Caco-2 (cell line): ENCODE measurements at regions of chr10 and their contacts with region 1.

Region 1: DNA sequence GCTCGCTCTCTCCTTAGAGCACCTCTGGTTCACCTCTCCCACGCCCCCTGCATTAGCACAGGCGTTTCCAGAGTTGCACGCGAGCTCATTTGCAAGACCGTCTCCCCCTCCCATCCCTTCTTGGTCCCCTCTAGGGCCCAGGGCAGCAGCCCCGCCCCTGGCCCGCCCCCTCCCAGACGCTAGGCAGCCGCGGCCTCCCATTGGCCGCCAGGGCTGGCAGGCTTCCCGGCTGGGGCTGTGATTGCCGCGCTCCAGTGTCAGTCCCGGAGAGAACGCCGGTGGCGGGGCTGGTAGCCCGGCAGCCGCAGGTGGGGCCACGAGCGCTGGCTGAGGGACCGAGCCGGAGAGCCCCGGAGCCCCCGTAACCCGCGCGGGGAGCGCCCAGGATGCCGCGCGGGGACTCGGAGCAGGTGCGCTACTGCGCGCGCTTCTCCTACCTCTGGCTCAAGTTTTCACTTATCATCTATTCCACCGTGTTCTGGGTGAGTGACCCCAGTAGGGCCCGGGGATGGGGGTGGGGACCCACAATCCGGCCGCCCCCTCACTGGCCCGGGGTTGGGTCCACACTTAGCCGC is at the start of gene TSPAN15:
- DNase-seq: peak; percentile 97 to 99
- H3K4me3 ChIP-seq: peak within 1 kb of the TSS; percentile 74
- H3K4me3 Mint-ChIP-seq: peak within 1 kb of the TSS; percentile 78
- H3K27ac Mint-ChIP-seq: peak within 1 kb of the TSS; percentile 81
- H3K4me1 ChIP-seq: peaks cover 44% of the 10 kb centered on the region
- H3K4me1 Mint-ChIP-seq: peaks cover 45% of the 10 kb centered on the region
- H3K27me3 ChIP-seq: no peaks in the 10 kb centered on the region
- H3K27me3 Mint-ChIP-seq: no peaks in the 10 kb centered on the region
- CTCF ChIP-seq: peak in 1 of 2 experiments; percentile 38
- total RNA-seq, gene TSPAN15: 86.5 and 89.0 TPM in 2 replicates

Region 2: DNA sequence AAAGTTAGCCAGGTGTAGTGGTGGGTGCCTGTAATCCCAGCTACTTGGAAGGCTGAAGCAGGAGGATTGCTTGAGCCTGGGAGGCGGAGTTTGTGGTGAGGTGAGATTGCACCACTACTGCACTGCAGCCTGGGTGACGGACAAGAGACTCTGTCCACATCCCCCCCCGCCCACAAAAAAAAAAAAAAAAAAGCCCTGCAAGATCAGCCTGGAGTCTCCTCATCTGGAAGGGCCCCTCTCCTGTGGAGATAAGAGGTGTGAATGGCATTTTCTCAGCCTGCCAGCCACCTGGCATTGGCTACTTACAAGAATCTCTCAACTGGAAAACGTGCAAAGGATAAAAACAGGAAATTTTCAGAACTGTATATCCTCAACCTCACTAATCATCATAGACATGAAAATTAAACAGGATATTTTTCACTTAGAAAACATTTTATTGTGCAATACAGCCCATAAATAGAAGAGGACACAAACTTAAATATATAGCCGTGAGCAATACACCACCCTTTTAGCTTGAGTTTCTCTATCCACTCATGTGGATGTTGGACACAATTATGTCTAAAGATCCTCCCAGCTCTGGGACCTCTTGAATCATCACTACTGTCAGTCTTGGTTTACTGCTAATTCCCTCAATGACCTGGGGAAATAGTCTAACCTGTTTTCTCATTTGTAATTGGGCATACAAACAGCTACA is 11.3 kb before region 1 on chr10:
- CTCF ChIA-PET with region 1: interaction called, 8 read pairs
- POLR2A ChIA-PET with region 1: interaction called, 7 read pairs
- intact Hi-C with region 1: loop called (anchors 1 kb)
- DNase-seq: peak; percentile 85 to 91
- H3K4me3 ChIP-seq: no peak overlapping the region
- H3K4me3 Mint-ChIP-seq: peak overlapping the region; percentile 56
- H3K27ac Mint-ChIP-seq: peak overlapping the region; percentile 86
- H3K4me1 ChIP-seq: peaks cover 36% of the 10 kb centered on the region
- H3K4me1 Mint-ChIP-seq: peaks cover 44% of the 10 kb centered on the region
- H3K27me3 ChIP-seq: no peaks in the 10 kb centered on the region
- H3K27me3 Mint-ChIP-seq: no peaks in the 10 kb centered on the region
- CTCF ChIP-seq: no peak

Region 3: GRCh38 chr10:69468751-69469089 is 17.4 kb after region 1 on chr10:
- CTCF ChIA-PET with region 1: interaction called, 15 read pairs
- POLR2A ChIA-PET with region 1: interaction called, 10 read pairs
- intact Hi-C with region 1: no loop called
- DNase-seq: peak in 1 of 2 experiments; percentile 35
- H3K4me3 ChIP-seq: no peak overlapping the region
- H3K4me3 Mint-ChIP-seq: no peak overlapping the region
- H3K27ac Mint-ChIP-seq: peak overlapping the region; percentile 49
- H3K4me1 ChIP-seq: peaks cover 28% of the 10 kb centered on the region
- H3K4me1 Mint-ChIP-seq: peaks cover 9% of the 10 kb centered on the region
- H3K27me3 ChIP-seq: no peaks in the 10 kb centered on the region
- H3K27me3 Mint-ChIP-seq: no peaks in the 10 kb centered on the region
- CTCF ChIP-seq: no peak

Region 4: DNA sequence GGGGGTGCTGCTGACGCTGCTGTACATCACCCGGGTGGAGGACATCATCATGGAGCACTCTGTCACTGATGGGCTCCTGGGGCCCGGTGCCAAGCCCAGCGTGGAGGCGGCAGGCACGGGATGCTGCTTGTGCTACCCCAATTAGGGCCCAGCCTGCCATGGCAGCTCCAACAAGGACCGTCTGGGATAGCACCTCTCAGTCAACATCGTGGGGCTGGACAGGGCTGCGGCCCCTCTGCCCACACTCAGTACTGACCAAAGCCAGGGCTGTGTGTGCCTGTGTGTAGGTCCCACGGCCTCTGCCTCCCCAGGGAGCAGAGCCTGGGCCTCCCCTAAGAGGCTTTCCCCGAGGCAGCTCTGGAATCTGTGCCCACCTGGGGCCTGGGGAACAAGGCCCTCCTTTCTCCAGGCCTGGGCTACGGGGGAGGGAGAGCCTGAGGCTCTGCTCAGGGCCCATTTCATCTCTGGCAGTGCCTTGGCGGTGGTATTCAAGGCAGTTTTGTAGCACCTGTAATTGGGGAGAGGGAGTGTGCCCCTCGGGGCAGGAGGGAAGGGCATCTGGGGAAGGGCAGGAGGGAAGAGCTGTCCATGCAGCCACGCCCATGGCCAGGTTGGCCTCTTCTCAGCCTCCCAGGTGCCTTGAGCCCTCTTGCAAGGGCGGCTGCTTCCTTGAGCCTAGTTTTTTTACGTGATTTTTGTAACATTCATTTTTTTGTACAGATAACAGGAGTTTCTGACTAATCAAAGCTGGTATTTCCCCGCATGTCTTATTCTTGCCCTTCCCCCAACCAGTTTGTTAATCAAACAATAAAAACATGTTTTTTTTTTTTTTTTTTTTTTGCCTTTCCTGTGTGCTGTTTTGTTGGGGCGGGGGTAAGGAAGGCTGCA is 55.8 kb after region 1 on chr10:
- CTCF ChIA-PET with region 1: interaction called, 7 read pairs
- POLR2A ChIA-PET with region 1: no interaction called
- intact Hi-C with region 1: loop called (anchors 5 kb)
- DNase-seq: peak in 1 of 2 experiments; percentile 44
- H3K4me3 ChIP-seq: no peak overlapping the region
- H3K4me3 Mint-ChIP-seq: no peak overlapping the region
- H3K27ac Mint-ChIP-seq: no peak overlapping the region
- H3K4me1 ChIP-seq: peaks cover 5% of the 10 kb centered on the region
- H3K4me1 Mint-ChIP-seq: no peaks in the 10 kb centered on the region
- H3K27me3 ChIP-seq: no peaks in the 10 kb centered on the region
- H3K27me3 Mint-ChIP-seq: no peaks in the 10 kb centered on the region
- CTCF ChIP-seq: no peak

Region 5: DNA sequence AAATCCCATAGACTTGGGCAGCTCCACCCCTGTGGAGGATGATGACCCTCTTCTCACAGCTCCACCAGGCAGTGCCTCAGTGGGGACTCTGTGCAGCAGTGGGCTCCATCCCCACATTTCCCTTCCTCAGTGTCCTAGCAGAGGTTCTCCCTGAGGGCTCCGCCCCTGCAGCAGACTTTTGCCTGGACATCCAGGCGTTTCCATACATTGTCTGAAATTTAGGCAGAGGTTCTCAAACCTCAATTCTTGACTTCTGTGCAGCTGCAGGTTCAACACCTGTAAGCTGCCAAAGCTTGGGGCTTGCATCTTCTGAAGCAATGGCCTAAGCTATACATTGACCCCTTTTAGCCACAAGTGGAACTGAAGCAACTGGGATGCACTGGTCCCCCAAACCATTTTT is 90.2 kb after region 1 on chr10:
- CTCF ChIA-PET with region 1: no interaction called
- POLR2A ChIA-PET with region 1: no interaction called
- intact Hi-C with region 1: no loop called
- DNase-seq: no peak
- H3K4me3 ChIP-seq: no peak overlapping the region
- H3K4me3 Mint-ChIP-seq: no peak overlapping the region
- H3K27ac Mint-ChIP-seq: no peak overlapping the region
- H3K4me1 ChIP-seq: no peaks in the 10 kb centered on the region
- H3K4me1 Mint-ChIP-seq: no peaks in the 10 kb centered on the region
- H3K27me3 ChIP-seq: no peaks in the 10 kb centered on the region
- H3K27me3 Mint-ChIP-seq: peaks cover 7% of the 10 kb centered on the region
- CTCF ChIP-seq: no peak

Region 6: GRCh38 chr10:69731184-69731583 is 279.9 kb after region 1 on chr10:
- CTCF ChIA-PET with region 1: no interaction called
- POLR2A ChIA-PET with region 1: no interaction called
- intact Hi-C with region 1: no loop called
- DNase-seq: no peak
- H3K4me3 ChIP-seq: no peak overlapping the region
- H3K4me3 Mint-ChIP-seq: no peak overlapping the region
- H3K27ac Mint-ChIP-seq: no peak overlapping the region
- H3K4me1 ChIP-seq: no peaks in the 10 kb centered on the region
- H3K4me1 Mint-ChIP-seq: no peaks in the 10 kb centered on the region
- H3K27me3 ChIP-seq: no peaks in the 10 kb centered on the region; the same call in 1 of the 2 replicates
- H3K27me3 Mint-ChIP-seq: no peaks in the 10 kb centered on the region
- CTCF ChIP-seq: peak in 1 of 2 experiments; percentile 18